Endothelial cell of umbilical vein (primary cell): ENCODE measurements at regions of chr1 and their contacts with region 1.

Region 1: DNA sequence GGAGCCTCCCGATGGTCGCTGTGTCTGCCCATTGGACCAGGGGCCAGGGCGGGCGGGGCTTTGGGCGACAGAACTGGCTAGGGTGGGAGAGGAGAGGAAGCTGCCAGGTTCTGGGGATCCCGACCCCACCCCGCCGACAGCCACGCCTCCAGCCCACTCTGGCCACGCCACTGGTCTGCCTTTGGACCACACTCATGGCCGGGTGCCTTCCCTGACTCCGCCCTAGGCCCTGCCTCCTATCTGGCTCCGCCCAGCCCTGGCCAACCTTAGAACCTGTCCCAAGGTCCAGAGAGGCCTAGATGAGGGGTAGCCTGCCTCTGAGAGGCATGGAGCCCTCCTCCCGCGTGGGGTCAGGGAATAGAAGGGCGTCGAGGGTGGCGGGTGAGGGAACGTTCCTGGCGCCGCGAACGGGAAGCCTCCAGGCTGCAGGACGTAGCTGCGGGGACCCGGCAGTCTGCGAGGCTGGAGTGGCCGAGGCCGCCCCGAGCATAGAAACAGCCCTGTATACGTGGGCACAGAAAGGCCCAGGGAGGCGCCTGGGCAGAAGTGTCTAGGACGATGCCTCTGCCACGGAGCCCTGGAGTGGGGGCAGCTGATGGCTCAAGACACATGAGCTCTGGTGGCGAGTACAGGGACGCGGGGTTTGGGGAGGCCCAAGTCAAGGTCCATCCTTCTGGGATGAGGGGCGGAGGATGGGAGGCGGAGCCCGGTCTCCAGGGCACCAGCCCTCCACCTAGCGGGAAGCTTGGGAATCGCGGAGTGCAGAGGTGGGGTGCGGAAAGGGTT is 11.5 kb upstream of the COL16A1 start:
- DNase-seq: peak; percentile 92
- H3K4me3 ChIP-seq: peak overlapping the region in 2 of 3 experiments; percentile 9 to 27
- H3K27ac ChIP-seq: peak overlapping the region; percentile 62
- H3K4me1 ChIP-seq: peaks cover 24% of the 10 kb centered on the region
- H3K27me3 ChIP-seq: peaks cover 0 to 18% of the 10 kb centered on the region in 2 experiments
- CTCF ChIP-seq: peak; percentile 86 to 96
- POLR2A ChIP-seq: no peak

Region 2: DNA sequence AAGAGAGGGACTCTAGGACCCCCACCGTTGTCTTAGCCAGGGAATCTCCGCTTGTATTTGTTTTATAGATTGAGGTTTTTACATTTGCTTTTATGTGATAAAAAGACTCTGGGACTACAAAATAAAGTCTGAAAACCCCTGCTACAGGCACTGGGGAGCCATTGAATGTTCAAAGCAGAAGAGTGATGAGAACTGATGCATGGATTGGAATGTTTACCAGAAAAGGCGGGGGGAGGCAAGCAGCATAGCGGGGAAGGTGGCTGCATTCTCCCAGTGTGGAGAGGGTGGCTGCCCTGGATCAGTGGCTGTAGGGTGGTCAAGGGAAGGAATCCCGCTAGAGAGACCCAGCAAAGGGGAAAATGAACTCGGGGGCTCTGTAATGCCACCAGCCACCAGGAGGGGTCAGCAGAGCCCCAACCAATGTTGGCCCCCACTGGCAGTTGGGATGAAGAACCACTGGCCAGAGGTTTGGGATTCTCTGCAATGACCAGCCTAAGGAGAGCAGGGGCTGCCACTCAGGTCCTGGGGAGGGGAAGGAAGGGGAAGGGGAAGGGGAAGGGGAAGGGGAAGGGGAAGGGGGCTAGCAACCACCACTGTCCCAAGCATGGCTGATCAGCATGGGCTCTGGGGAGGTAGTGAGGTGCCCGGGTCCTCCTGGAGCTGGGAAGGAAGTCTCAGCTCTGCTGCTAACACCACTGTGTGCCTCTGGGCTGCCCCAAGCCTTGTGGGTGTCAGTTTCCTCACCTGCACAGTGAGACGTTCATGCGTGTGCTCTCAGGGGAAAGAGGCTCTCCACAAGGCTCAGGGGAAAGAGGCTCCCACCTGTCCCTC is 51.4 kb before region 1 on chr1:
- CTCF ChIA-PET with region 1: interaction called, 180 read pairs
- POLR2A ChIA-PET with region 1: no interaction called
- dilution Hi-C with region 1: no loop called
- intact Hi-C with region 1: loop called (anchors 1 kb)
- DNase-seq: peak; percentile 48
- H3K4me3 ChIP-seq: no peak overlapping the region
- H3K27ac ChIP-seq: no peak overlapping the region
- H3K4me1 ChIP-seq: no peaks in the 10 kb centered on the region
- H3K27me3 ChIP-seq: no peaks in the 10 kb centered on the region
- CTCF ChIP-seq: peak; percentile 86 to 90
- POLR2A ChIP-seq: no peak

Region 3: GRCh38 chr1:31683997-31684396 is 31.3 kb before region 1 on chr1:
- CTCF ChIA-PET with region 1: interaction called, 15 read pairs
- POLR2A ChIA-PET with region 1: no interaction called
- dilution Hi-C with region 1: no loop called
- intact Hi-C with region 1: no loop called
- DNase-seq: no peak
- H3K4me3 ChIP-seq: no peak overlapping the region
- H3K27ac ChIP-seq: no peak overlapping the region
- H3K4me1 ChIP-seq: peaks cover 19% of the 10 kb centered on the region
- H3K27me3 ChIP-seq: no peaks in the 10 kb centered on the region
- CTCF ChIP-seq: peak; percentile 30 to 56
- POLR2A ChIP-seq: no peak

Region 4: DNA sequence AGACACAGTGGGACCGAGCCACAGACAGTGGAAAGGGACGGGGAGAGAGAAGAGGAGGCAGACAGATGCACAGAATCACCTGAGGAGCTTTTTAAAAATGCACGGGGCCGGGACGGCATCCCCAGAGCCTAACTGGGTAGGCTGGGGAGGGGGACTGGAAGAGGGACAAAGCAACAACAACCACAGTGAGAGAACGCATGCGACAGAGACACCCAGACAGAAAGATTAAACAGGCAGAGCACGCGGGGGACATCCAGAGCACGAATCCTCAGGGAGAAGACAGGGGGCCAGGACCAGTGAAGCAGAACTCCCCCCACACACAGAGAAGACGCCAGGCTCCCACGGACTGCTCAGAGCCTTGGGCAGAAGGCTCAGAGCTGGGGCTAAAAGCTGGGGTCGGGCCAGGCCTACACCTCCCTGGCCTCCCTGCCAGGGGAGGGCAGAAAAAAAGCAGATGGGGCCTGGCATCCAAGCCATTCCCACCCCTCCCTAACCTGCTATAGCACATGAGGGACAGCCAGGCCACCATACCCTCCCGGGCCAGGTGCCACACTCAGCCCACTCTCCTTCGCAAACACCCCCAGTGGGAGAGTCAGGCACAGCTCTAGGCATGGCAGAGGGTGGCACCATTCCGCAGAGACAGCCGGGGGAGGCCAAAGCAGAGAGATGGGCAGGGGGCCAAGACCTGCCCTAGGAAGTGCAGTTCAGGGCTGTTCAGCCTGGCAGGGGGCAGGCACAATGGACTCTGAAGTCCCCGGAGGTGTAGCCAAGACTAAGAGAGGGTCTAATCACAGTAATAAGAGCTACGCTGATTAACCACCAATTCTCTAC is 18.3 kb after region 1 on chr1:
- CTCF ChIA-PET with region 1: interaction called, 11 read pairs
- POLR2A ChIA-PET with region 1: no interaction called
- dilution Hi-C with region 1: no loop called
- intact Hi-C with region 1: loop called (anchors 1 kb)
- DNase-seq: no peak
- H3K4me3 ChIP-seq: no peak overlapping the region
- H3K27ac ChIP-seq: no peak overlapping the region
- H3K4me1 ChIP-seq: no peaks in the 10 kb centered on the region
- H3K27me3 ChIP-seq: no peaks in the 10 kb centered on the region
- CTCF ChIP-seq: no peak
- POLR2A ChIP-seq: no peak

Region 5: GRCh38 chr1:32151319-32151787 is 436.1 kb after region 1 on chr1:
- CTCF ChIA-PET with region 1: no interaction called
- POLR2A ChIA-PET with region 1: no interaction called
- dilution Hi-C with region 1: no loop called
- intact Hi-C with region 1: no loop called
- DNase-seq: peak; percentile 16
- H3K4me3 ChIP-seq: no peak overlapping the region
- H3K27ac ChIP-seq: no peak overlapping the region
- H3K4me1 ChIP-seq: no peaks in the 10 kb centered on the region
- H3K27me3 ChIP-seq: no peaks in the 10 kb centered on the region
- CTCF ChIP-seq: no peak
- POLR2A ChIP-seq: no peak